ENCODE measurements at regions of chr5 and their contacts with region 1.

Region 1: DNA sequence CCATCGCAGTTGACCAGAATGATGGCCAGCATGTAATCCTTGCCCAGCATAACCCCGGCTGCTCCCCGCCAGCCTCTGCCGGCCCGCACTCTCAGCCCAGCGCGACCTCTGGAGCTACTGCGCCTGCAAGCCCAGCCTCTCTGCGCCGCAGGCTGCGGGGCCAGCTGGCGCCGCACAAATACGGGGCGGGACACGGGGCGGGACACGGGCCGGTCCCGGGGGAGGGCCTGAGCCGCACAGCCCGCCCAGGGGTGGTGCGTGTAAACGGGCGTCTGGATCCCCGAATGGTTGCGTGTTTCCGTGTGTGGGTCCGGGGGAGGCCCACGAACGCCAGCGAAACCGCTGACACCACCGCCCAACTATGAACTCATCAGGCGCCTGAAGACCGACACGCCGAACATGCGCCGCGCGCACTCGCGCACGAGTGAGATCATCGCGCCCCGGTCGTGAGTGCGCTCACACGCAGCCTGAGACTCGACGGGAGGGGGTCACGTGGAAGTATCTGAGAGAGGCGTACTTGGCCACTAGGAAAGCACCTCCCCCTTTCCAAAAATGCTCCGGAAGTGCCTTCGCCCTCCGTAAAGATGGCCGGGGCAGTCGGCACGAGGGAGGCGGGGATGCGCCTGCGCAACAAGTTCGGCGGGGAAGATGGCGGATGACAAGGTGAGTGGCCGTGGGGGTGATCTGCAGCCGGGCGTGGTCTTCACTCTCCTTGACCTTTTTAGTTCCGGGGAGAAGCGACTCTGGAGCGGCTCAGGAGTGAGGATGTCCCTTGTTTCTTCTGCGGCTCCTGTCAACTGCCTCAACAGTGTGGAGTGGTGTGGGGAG is at the starts of genes APBB3 and SLC35A4:
- DNase-seq: peak; percentile 92 to 98
- ATAC-seq: peak; percentile 93 to 96 (median 94)
- H3K4me3 ChIP-seq: peak within 1 kb of the TSS; percentile 57 to 86 (median 70)
- H3K27ac ChIP-seq: peak within 1 kb of the TSS; percentile 88 to 98 (median 94)
- H3K4me1 ChIP-seq: peaks cover 7 to 67% (median 56%) of the 10 kb centered on the region in 9 donors
- H3K27me3 ChIP-seq: no peaks in the 10 kb centered on the region
- CTCF ChIP-seq: no peak
- total RNA-seq, gene APBB3: 8.0 to 18.7 (median 13.3) TPM
- total RNA-seq, gene SLC35A4: 69.7 to 105 (median 80.6) TPM

Region 2: DNA sequence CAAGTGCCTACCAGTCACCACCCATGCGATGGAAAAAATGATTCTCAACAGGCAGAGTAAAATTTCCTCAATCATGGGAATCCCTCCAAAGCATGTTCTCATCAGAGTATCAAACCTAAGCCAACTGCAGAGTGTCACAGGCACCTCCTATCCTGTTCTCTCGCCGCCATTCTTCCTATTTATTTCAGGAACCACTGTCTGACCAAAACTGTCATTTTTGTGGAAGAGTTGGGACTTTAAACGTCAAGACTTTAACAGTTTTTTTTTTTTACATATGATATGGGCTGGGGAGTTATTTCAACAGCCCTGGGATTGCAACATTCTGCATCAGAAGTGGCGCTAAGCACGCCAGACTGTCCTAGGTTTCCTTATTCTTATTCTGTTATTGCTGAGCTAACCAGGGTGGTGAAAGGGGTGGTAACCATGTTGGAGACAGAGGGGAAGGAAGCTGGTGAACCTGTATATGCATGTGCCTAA is 291.0 kb before region 1 on chr5:
- intact Hi-C with region 1: no loop called
- DNase-seq: no peak
- ATAC-seq: peak; percentile 32 to 84 (median 70)
- H3K4me3 ChIP-seq: no peak overlapping the region
- H3K27ac ChIP-seq: peak overlapping the region in 8 of 10 donors; percentile 10 to 61 (median 42)
- H3K4me1 ChIP-seq: peaks cover 0 to 41% (median 21%) of the 10 kb centered on the region in 9 donors
- H3K27me3 ChIP-seq: no peaks in the 10 kb centered on the region
- CTCF ChIP-seq: no peak

Region 3: GRCh38 chr5:140547508-140548299 is 16.7 kb before region 1 on chr5 and contains the start of gene EIF4EBP3:
- intact Hi-C with region 1: loop called in 1 of 10 experiments (anchors 1 kb)
- DNase-seq: peak; percentile 98
- ATAC-seq: peak; percentile 93 to 96 (median 96)
- H3K4me3 ChIP-seq: peak within 1 kb of the TSS in 9 of 10 donors; percentile 35 to 64 (median 57)
- H3K27ac ChIP-seq: peak within 1 kb of the TSS; percentile 77 to 97 (median 94)
- H3K4me1 ChIP-seq: peaks cover 27 to 53% (median 46%) of the 10 kb centered on the region in 9 donors
- H3K27me3 ChIP-seq: no peaks in the 10 kb centered on the region
- CTCF ChIP-seq: peak; percentile 46 to 78 (median 60)
- total RNA-seq, gene EIF4EBP3: 9.2 to 36.5 (median 21.5) TPM

Region 4: GRCh38 chr5:140632150-140633020 is 68.0 kb after region 1 on chr5:
- intact Hi-C with region 1: loop called in 6 of 10 experiments (anchors 5 to 10 kb)
- DNase-seq: peak; percentile 50 to 56
- ATAC-seq: peak; percentile 62 to 85 (median 77)
- H3K4me3 ChIP-seq: peak overlapping the region; percentile 10 to 69 (median 62)
- H3K27ac ChIP-seq: peak overlapping the region in 9 of 10 donors; percentile 14 to 92 (median 74)
- H3K4me1 ChIP-seq: peaks cover 0 to 39% (median 19%) of the 10 kb centered on the region in 9 donors
- H3K27me3 ChIP-seq: no peaks in the 10 kb centered on the region
- CTCF ChIP-seq: no peak

Region 5: DNA sequence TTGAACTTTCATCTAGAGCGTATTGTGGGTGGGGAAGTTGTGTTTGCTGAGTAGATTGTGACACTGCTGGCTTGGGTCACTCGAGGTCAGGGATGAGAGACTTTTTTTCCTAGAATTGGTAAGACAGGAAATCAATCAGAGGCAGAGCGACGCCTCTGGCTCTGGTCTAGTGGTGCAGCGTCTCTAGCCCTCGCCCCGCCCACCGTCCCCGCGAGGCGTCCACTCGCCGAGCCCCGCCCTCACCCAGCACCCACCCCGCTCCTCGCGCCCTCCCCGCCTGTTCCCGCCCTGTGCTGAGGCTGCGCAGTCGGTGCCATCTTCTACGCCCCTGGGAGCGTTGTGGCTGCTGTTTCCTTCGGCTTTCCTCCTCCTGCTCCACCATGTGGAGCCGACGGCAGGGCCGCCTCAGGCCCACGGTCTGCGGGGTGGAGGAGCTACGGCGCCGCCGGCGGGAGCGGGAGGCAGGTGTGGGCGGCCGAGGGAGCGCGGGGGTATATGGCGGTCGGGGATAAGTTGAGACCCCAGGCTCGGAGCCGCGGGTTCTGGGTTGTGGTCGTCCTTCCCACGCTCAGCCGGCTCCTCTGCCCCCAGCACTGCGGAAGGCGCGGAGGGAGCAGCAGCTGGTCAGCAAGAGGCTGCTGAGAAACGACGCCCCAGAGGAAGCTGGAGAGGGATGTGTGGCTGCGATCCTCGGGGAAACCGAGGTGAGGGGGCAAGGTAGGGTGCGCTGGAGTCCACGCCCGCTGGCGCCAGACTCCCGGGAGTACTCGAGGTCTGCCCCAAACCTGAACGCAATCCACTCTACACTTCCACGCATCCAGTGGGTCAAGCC is 75.0 kb after region 1 on chr5 and contains the start of gene TMCO6:
- intact Hi-C with region 1: loop called in 8 of 10 experiments (anchors 2 to 10 kb)
- DNase-seq: peak; percentile 98 to 99
- ATAC-seq: peak; percentile 98 to 99 (median 99)
- H3K4me3 ChIP-seq: peak within 1 kb of the TSS; percentile 53 to 90 (median 70)
- H3K27ac ChIP-seq: peak within 1 kb of the TSS; percentile 64 to 97 (median 88)
- H3K4me1 ChIP-seq: peaks cover 0 to 44% (median 16%) of the 10 kb centered on the region in 9 donors
- H3K27me3 ChIP-seq: no peaks in the 10 kb centered on the region
- CTCF ChIP-seq: peak; percentile 41 to 89 (median 75)
- total RNA-seq, gene TMCO6: 1.6 to 5.2 (median 3.2) TPM

Region 6: DNA sequence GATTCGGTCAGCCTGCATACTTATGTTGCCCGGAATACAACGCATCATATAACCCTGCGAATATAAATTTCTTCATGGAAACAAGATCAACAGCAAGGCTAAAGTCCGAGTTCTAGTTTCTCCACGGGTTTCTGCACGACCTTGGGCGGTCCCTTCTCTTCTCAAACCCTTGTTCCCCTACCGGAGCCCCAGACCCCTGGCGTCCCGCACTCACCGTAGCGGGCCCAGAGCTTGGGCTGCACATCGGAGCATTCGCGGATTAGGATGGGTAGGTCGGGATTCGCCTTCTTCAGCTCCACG is 82.6 kb after region 1 on chr5:
- intact Hi-C with region 1: loop called in 1 of 10 experiments (anchors 5 kb)
- DNase-seq: no peak
- ATAC-seq: peak in 2 of 8 donors; percentile 3 to 5
- H3K4me3 ChIP-seq: peak overlapping the region; percentile 53 to 99 (median 90)
- H3K27ac ChIP-seq: peak overlapping the region; percentile 54 to 92 (median 86)
- H3K4me1 ChIP-seq: peaks cover 4 to 46% (median 26%) of the 10 kb centered on the region in 9 donors
- H3K27me3 ChIP-seq: no peaks in the 10 kb centered on the region
- CTCF ChIP-seq: no peak